CD4-positive, alpha-beta T cell (primary cell): ENCODE measurements at regions of chr19 and their contacts with region 1.

Region 1: GRCh38 chr19:38929929-38930775 is at the start of gene SARS2:
- DNase-seq: peak; percentile 87 to 97 (median 92)
- ATAC-seq: peak; percentile 68
- H3K4me3 ChIP-seq: peak within 1 kb of the TSS; percentile 79
- H3K4me3 Mint-ChIP-seq: peak within 1 kb of the TSS; percentile 99
- H3K27ac ChIP-seq: peak within 1 kb of the TSS; percentile 86 to 87
- H3K27ac Mint-ChIP-seq: peak within 1 kb of the TSS; percentile 100
- H3K4me1 ChIP-seq: peaks cover 46% of the 10 kb centered on the region
- H3K4me1 Mint-ChIP-seq: peaks cover 39% of the 10 kb centered on the region
- H3K27me3 ChIP-seq: no peaks in the 10 kb centered on the region
- H3K27me3 Mint-ChIP-seq: no peaks in the 10 kb centered on the region
- CTCF ChIP-seq: peak; percentile 100
- total RNA-seq, gene SARS2: 18.7 to 22.8 TPM

Region 2: GRCh38 chr19:38544034-38544958 is 385.9 kb before region 1 on chr19:
- CTCF ChIA-PET with region 1: no interaction called
- POLR2A ChIA-PET with region 1: no interaction called
- intact Hi-C with region 1: loop called in 1 of 2 experiments (anchors 2 kb)
- DNase-seq: peak in 5 of 14 experiments; percentile 12 to 85 (median 75)
- ATAC-seq: peak; percentile 92
- H3K4me3 ChIP-seq: no peak overlapping the region
- H3K4me3 Mint-ChIP-seq: no peak overlapping the region
- H3K27ac ChIP-seq: no peak overlapping the region
- H3K27ac Mint-ChIP-seq: peak overlapping the region; percentile 0
- H3K4me1 ChIP-seq: peaks cover 24% of the 10 kb centered on the region
- H3K4me1 Mint-ChIP-seq: peaks cover 24% of the 10 kb centered on the region
- H3K27me3 ChIP-seq: no peaks in the 10 kb centered on the region
- H3K27me3 Mint-ChIP-seq: no peaks in the 10 kb centered on the region
- CTCF ChIP-seq: peak; percentile 81

Region 3: DNA sequence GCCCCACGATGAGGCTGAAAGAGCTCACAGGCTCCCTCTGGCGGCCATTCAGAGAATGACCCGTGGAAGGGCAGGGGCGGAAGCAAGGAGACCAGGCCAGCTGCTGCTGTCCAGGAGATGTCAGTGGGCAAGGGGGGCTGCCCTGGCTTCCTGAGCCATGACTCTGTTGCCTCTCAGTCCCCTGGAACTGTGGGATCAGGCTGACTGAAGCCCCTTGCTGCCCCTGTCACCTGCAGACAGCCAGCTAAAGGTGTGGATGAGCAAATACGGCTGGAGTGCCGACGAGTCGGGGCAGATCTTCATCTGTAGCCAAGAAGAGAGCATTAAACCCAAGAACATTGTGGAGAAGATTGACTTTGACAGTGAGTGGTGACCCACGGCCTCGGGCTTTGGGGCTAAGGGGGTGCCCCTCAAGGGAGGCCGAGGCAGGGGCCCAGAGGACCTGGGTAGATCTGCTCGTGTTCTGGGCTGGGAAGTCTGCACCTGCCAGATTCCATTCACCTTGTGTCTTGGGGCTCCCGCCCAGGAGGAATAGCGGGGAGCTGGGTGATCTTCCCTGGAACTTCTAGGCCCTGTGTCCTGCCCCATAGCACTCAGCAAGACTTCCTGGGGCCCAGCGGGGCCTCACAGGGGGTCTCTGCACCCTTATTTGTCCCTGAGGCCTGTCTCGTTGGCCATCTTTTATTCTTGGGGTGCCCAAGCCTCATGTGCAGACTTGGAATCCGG is 295.2 kb before region 1 on chr19:
- CTCF ChIA-PET with region 1: interaction called, 8 read pairs
- POLR2A ChIA-PET with region 1: no interaction called
- intact Hi-C with region 1: loop called (anchors 5 kb)
- DNase-seq: peak; percentile 60 to 84 (median 67)
- ATAC-seq: no peak
- H3K4me3 ChIP-seq: no peak overlapping the region
- H3K4me3 Mint-ChIP-seq: peak overlapping the region; percentile 11
- H3K27ac ChIP-seq: no peak overlapping the region
- H3K27ac Mint-ChIP-seq: peak overlapping the region; percentile 74
- H3K4me1 ChIP-seq: peaks cover 28% of the 10 kb centered on the region
- H3K4me1 Mint-ChIP-seq: peaks cover 35% of the 10 kb centered on the region
- H3K27me3 ChIP-seq: no peaks in the 10 kb centered on the region
- H3K27me3 Mint-ChIP-seq: no peaks in the 10 kb centered on the region
- CTCF ChIP-seq: peak; percentile 95

Region 4: GRCh38 chr19:38769635-38770211 is 160.4 kb before region 1 on chr19:
- CTCF ChIA-PET with region 1: interaction called, 17 read pairs
- POLR2A ChIA-PET with region 1: interaction called, 9 read pairs
- intact Hi-C with region 1: no loop called
- DNase-seq: peak; percentile 83 to 94 (median 92)
- ATAC-seq: peak; percentile 88
- H3K4me3 ChIP-seq: peak overlapping the region; percentile 48
- H3K4me3 Mint-ChIP-seq: peak overlapping the region; percentile 47
- H3K27ac ChIP-seq: peak overlapping the region in 1 of 2 donors; percentile 57
- H3K27ac Mint-ChIP-seq: peak overlapping the region; percentile 65
- H3K4me1 ChIP-seq: peaks cover 14% of the 10 kb centered on the region
- H3K4me1 Mint-ChIP-seq: peaks cover 7% of the 10 kb centered on the region
- H3K27me3 ChIP-seq: no peaks in the 10 kb centered on the region
- H3K27me3 Mint-ChIP-seq: no peaks in the 10 kb centered on the region
- CTCF ChIP-seq: peak; percentile 94

Region 5: GRCh38 chr19:38849860-38850435 is 80.2 kb before region 1 on chr19 and contains the start of gene HNRNPL:
- CTCF ChIA-PET with region 1: interaction called, 5 read pairs
- POLR2A ChIA-PET with region 1: interaction called, 9 read pairs
- intact Hi-C with region 1: loop called in 1 of 2 experiments (anchors 1 kb)
- DNase-seq: peak; percentile 98 to 100 (median 99)
- ATAC-seq: peak; percentile 69
- H3K4me3 ChIP-seq: peak within 1 kb of the TSS; percentile 76
- H3K4me3 Mint-ChIP-seq: peak within 1 kb of the TSS; percentile 98
- H3K27ac ChIP-seq: peak within 1 kb of the TSS; percentile 95 to 97
- H3K27ac Mint-ChIP-seq: peak within 1 kb of the TSS; percentile 97
- H3K4me1 ChIP-seq: peaks cover 66% of the 10 kb centered on the region
- H3K4me1 Mint-ChIP-seq: peaks cover 63% of the 10 kb centered on the region
- H3K27me3 ChIP-seq: no peaks in the 10 kb centered on the region
- H3K27me3 Mint-ChIP-seq: no peaks in the 10 kb centered on the region
- CTCF ChIP-seq: peak; percentile 16
- total RNA-seq, gene HNRNPL: 535 to 565 TPM

Region 6: GRCh38 chr19:38877781-38878574 is 52.2 kb before region 1 on chr19 and contains the start of gene RINL:
- CTCF ChIA-PET with region 1: interaction called, 3 read pairs
- POLR2A ChIA-PET with region 1: interaction called, 17 read pairs
- intact Hi-C with region 1: no loop called
- DNase-seq: peak; percentile 45 to 86 (median 73)
- ATAC-seq: peak; percentile 96
- H3K4me3 ChIP-seq: peak within 1 kb of the TSS; percentile 58
- H3K4me3 Mint-ChIP-seq: peak within 1 kb of the TSS; percentile 91
- H3K27ac ChIP-seq: peak within 1 kb of the TSS; percentile 90 to 96
- H3K27ac Mint-ChIP-seq: peak within 1 kb of the TSS; percentile 97
- H3K4me1 ChIP-seq: peaks cover 55% of the 10 kb centered on the region
- H3K4me1 Mint-ChIP-seq: peaks cover 38% of the 10 kb centered on the region
- H3K27me3 ChIP-seq: no peaks in the 10 kb centered on the region
- H3K27me3 Mint-ChIP-seq: no peaks in the 10 kb centered on the region
- CTCF ChIP-seq: no peak
- total RNA-seq, gene RINL: 19.5 to 21.3 TPM

Region 7: DNA sequence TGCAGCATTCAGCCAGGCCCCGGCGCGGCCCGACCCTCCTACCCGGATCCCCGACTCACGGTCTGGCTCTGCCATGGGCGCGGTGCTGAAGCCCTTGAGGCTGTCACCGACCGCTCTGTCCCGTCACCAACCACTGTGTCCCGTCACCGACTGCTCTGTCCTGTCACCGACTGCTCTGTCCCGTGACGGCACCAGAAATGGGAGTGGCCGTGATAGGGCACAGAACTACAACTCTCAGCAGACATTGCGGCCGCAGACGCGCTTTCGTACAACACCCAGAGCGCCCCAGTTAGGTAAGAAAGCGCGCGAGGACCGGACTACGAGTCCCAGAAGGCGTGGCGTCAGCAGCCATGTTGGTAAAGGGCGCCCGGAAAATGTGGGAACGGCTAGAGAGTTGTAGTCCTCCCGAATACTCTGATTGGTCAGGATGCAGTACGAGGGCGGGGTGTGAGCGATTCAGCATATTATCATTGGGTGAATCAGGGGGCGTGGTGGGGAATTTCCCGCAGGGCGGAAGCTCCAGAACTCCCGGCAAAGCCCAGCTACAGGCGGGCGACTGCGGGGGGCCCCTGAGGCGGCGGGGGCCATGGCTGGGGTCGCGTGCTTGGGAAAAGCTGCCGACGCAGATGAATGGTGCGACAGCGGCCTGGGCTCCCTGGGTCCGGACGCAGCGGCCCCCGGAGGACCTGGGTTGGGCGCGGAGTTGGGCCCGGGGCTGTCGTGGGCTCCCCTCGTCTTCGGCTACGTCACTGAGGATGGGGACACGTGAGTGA is 30.5 kb before region 1 on chr19 and contains the starts of genes NFKBIB and SIRT2:
- CTCF ChIA-PET with region 1: interaction called, 46 read pairs
- POLR2A ChIA-PET with region 1: interaction called, 27 read pairs
- intact Hi-C with region 1: loop called (anchors 1 kb)
- DNase-seq: peak; percentile 97 to 100 (median 99)
- ATAC-seq: peak; percentile 86
- H3K4me3 ChIP-seq: peak within 1 kb of the TSS; percentile 97
- H3K4me3 Mint-ChIP-seq: peak within 1 kb of the TSS; percentile 93
- H3K27ac ChIP-seq: peak within 1 kb of the TSS; percentile 97 to 99
- H3K27ac Mint-ChIP-seq: peak within 1 kb of the TSS; percentile 89
- H3K4me1 ChIP-seq: peaks cover 49% of the 10 kb centered on the region
- H3K4me1 Mint-ChIP-seq: peaks cover 47% of the 10 kb centered on the region
- H3K27me3 ChIP-seq: no peaks in the 10 kb centered on the region
- H3K27me3 Mint-ChIP-seq: no peaks in the 10 kb centered on the region
- CTCF ChIP-seq: no peak
- total RNA-seq, gene NFKBIB: 29.3 to 30.1 TPM
- total RNA-seq, gene SIRT2: 60.8 to 67.8 TPM

Region 8: DNA sequence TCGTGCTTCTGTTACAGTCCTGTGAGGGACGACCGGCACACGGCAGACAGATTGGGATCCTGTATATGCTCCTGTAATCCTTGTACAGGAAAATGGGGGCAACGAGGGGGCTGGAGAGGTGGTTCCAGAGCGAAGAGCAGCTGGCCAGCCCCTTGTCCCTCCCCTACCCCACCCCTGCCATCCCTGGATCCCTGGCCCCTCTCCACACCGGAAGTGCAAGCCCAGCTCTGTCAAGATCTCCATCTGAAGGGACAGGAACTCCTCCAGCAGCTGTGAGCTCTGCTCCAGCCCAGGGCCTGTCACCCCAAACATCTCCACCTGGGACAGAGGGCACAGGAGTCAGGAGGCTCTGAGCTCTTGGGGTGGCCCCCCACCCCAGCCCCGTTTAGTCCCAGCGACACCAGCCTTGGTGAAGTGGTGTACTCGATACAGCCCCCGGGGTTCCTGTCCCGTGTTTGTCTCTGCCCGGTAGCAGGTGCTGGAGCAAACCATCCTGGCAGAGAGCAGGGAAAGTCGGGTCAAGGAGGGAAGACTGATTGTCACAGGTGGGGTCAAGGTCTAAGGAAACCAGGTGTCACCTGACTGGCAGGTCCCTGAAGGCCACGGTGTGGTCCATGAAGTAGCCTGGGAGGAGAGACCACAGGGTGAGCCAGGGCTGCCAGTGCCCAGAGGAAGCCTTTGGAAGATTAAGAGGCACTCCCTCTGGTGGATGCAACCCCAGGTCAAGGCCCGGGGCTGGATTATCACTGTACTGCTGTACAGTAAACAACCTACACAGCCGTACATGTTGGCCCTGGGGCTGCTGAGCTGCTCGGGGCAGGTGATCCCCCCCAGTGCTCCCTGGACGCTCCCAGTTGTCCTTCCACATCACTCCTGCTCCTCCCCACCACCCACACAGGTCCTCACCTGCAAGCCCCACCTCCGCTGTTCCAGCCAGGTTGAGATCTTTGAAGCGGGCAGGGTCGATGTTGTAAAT is 12.3 kb before region 1 on chr19:
- CTCF ChIA-PET with region 1: no interaction called
- POLR2A ChIA-PET with region 1: no interaction called
- intact Hi-C with region 1: no loop called
- DNase-seq: no peak
- ATAC-seq: no peak
- H3K4me3 ChIP-seq: no peak overlapping the region
- H3K4me3 Mint-ChIP-seq: no peak overlapping the region
- H3K27ac ChIP-seq: no peak overlapping the region
- H3K27ac Mint-ChIP-seq: no peak overlapping the region
- H3K4me1 ChIP-seq: peaks cover 3% of the 10 kb centered on the region
- H3K4me1 Mint-ChIP-seq: no peaks in the 10 kb centered on the region
- H3K27me3 ChIP-seq: no peaks in the 10 kb centered on the region
- H3K27me3 Mint-ChIP-seq: no peaks in the 10 kb centered on the region
- CTCF ChIP-seq: no peak

Region 9: GRCh38 chr19:38946229-38947010 is 16.3 kb after region 1 on chr19:
- CTCF ChIA-PET with region 1: no interaction called
- POLR2A ChIA-PET with region 1: no interaction called
- intact Hi-C with region 1: no loop called
- DNase-seq: peak in 1 of 14 experiments; percentile 16
- ATAC-seq: no peak
- H3K4me3 ChIP-seq: no peak overlapping the region
- H3K4me3 Mint-ChIP-seq: no peak overlapping the region
- H3K27ac ChIP-seq: no peak overlapping the region
- H3K27ac Mint-ChIP-seq: no peak overlapping the region
- H3K4me1 ChIP-seq: peaks cover 19% of the 10 kb centered on the region
- H3K4me1 Mint-ChIP-seq: peaks cover 18% of the 10 kb centered on the region
- H3K27me3 ChIP-seq: peaks cover 0 to 3% of the 10 kb centered on the region in 2 experiments
- H3K27me3 Mint-ChIP-seq: no peaks in the 10 kb centered on the region
- CTCF ChIP-seq: no peak

Region 10: GRCh38 chr19:39014037-39014436 is 83.9 kb after region 1 on chr19:
- CTCF ChIA-PET with region 1: no interaction called
- POLR2A ChIA-PET with region 1: no interaction called
- intact Hi-C with region 1: no loop called
- DNase-seq: no peak
- ATAC-seq: no peak
- H3K4me3 ChIP-seq: no peak overlapping the region
- H3K4me3 Mint-ChIP-seq: no peak overlapping the region
- H3K27ac ChIP-seq: no peak overlapping the region
- H3K27ac Mint-ChIP-seq: no peak overlapping the region
- H3K4me1 ChIP-seq: no peaks in the 10 kb centered on the region
- H3K4me1 Mint-ChIP-seq: no peaks in the 10 kb centered on the region
- H3K27me3 ChIP-seq: no peaks in the 10 kb centered on the region
- H3K27me3 Mint-ChIP-seq: peaks cover 21% of the 10 kb centered on the region
- CTCF ChIP-seq: no peak

Region 11: GRCh38 chr19:39125554-39126311 is 195.6 kb after region 1 on chr19 and contains the start of gene PAK4:
- CTCF ChIA-PET with region 1: no interaction called
- POLR2A ChIA-PET with region 1: no interaction called
- intact Hi-C with region 1: no loop called
- DNase-seq: peak; percentile 89 to 98 (median 95)
- ATAC-seq: peak; percentile 91
- H3K4me3 ChIP-seq: peak within 1 kb of the TSS; percentile 58
- H3K4me3 Mint-ChIP-seq: peak within 1 kb of the TSS; percentile 93
- H3K27ac ChIP-seq: peak within 1 kb of the TSS; percentile 69 to 88
- H3K27ac Mint-ChIP-seq: peak within 1 kb of the TSS; percentile 92
- H3K4me1 ChIP-seq: peaks cover 30% of the 10 kb centered on the region
- H3K4me1 Mint-ChIP-seq: peaks cover 55% of the 10 kb centered on the region
- H3K27me3 ChIP-seq: no peaks in the 10 kb centered on the region
- H3K27me3 Mint-ChIP-seq: peaks cover 5% of the 10 kb centered on the region
- CTCF ChIP-seq: no peak
- total RNA-seq, gene PAK4: 2.7 to 6.3 TPM